MCF 10A (cell line): ENCODE measurements at regions of chr22 and their contacts with region 1.

Region 1: GRCh38 chr22:25447686-25448434 is 116.6 kb upstream of the GRK3 start:
- DNase-seq: peak; percentile 88
- H3K4me3 Mint-ChIP-seq: peak overlapping the region; percentile 91
- H3K27ac Mint-ChIP-seq: peak overlapping the region; percentile 57
- H3K4me1 Mint-ChIP-seq: peaks cover 22% of the 10 kb centered on the region
- H3K27me3 Mint-ChIP-seq: no peaks in the 10 kb centered on the region
- CTCF ChIP-seq: peak; percentile 90

Region 2: DNA sequence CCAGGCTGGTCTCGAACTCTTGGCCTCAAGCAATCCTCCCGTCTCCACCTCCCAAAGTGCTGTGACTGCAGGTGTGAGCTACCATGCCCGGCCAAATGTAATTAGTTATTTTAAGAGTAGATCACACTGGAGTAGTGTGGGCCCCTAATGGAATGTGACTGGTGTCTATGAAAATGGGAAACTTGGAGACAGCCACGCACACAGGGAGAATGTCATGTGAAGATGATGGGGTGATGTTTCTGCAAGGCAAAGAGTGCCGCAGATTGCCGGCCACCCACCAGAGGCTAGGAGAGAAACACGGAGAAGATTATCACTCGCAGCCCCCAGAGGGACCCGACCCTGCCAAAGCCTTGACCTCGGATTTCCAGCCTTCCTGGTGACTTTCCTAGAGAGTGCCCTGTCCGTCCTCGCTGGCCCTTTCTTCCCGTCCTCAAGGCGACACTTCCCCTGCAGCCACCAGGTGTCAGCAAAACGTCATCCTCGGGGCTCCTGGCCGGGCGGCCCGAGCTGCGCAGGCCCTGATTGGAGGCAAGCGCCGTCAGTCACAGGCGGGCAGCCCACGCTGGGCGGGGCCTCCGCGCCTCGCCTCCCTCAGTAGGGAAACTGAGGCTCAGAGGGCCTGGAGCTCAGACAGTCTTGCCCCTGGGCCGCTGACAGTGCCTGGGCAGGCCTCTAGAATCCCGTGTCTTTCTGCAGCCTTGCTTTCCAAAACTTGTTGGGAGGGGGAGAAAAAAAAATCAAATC is 212.1 kb before region 1 on chr22:
- CTCF ChIA-PET with region 1: interaction called, 3 read pairs
- POLR2A ChIA-PET with region 1: no interaction called
- intact Hi-C with region 1: loop called (anchors 5 kb)
- DNase-seq: peak; percentile 80
- H3K4me3 Mint-ChIP-seq: no peak overlapping the region
- H3K27ac Mint-ChIP-seq: no peak overlapping the region
- H3K4me1 Mint-ChIP-seq: peaks cover 7% of the 10 kb centered on the region
- H3K27me3 Mint-ChIP-seq: peaks cover 8% of the 10 kb centered on the region
- CTCF ChIP-seq: peak; percentile 86

Region 3: DNA sequence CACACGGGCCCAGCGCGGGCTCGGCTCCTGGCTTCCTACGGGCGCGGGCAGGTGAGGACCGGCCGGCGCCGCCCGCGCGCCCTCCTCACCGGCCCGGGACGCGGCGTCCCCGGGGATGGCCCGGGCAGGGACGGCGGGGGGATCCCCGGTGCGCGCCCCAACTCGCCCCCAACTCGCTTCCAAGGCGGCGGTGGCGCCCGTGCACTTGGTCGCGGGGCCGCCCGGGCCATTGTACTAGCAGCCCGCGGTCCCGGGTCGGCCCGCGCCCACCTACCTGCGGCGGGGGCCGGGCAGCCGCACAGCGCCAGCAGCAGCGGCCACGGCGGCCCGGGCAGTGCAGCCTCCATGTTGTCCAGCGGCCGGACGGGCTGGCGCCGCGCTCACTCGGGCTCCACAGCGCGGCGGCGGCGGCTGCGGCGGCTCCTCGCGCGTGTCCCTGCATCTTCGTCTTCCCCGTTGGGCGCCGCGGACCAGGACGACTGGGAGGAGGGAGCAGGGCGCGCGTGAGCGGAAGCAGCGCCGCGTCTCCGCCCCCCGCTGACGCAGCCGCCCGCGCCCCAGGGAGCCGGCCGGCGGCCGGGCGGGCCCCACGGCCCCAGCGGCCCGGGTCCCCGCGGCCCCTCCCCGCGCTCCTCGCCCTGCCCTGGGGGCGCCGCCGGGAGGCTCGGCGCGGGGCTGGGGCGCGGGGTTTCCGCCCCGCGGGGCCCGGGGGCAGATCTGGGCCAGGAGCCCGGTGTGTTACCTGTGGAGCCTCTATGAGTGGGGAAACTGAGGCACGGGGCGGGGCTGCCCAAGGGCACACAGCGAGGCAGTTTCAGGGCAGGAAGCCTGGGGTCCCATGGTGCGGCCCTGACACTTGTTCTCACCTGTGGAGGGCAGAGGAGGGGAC is 42.7 kb before region 1 on chr22:
- CTCF ChIA-PET with region 1: interaction called, 7 read pairs
- POLR2A ChIA-PET with region 1: interaction called, 8 read pairs
- intact Hi-C with region 1: loop called (anchors 5 kb)
- DNase-seq: peak; percentile 57
- H3K4me3 Mint-ChIP-seq: peak overlapping the region; percentile 83
- H3K27ac Mint-ChIP-seq: no peak overlapping the region
- H3K4me1 Mint-ChIP-seq: peaks cover 23% of the 10 kb centered on the region
- H3K27me3 Mint-ChIP-seq: no peaks in the 10 kb centered on the region
- CTCF ChIP-seq: no peak

Region 4: GRCh38 chr22:25437414-25438160 is 10.3 kb before region 1 on chr22:
- CTCF ChIA-PET with region 1: interaction called, 15 read pairs
- POLR2A ChIA-PET with region 1: no interaction called
- intact Hi-C with region 1: no loop called
- DNase-seq: no peak
- H3K4me3 Mint-ChIP-seq: no peak overlapping the region
- H3K27ac Mint-ChIP-seq: no peak overlapping the region
- H3K4me1 Mint-ChIP-seq: no peaks in the 10 kb centered on the region
- H3K27me3 Mint-ChIP-seq: peaks cover 14% of the 10 kb centered on the region
- CTCF ChIP-seq: no peak

Region 5: DNA sequence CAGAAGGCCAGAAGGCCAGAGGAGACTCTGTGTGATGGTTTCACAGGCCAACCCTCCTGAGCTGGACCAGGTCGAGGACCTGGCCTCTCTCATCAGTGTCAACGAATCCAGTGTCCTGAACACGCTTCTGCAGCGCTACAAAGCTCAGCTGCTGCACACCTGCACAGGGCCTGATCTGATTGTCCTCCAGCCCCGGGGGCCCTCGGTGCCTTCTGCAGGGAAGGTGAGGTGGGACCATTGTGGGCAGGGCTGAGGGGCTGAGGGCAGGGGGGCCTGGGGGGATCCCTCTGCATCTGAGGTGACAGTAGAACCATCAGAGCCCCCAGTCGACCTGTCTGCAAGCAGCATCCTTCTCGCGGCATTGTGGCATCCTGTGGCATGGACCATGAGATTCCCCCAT is 324.4 kb after region 1 on chr22:
- CTCF ChIA-PET with region 1: interaction called, 10 read pairs
- POLR2A ChIA-PET with region 1: no interaction called
- intact Hi-C with region 1: loop called (anchors 5 kb)
- DNase-seq: no peak
- H3K4me3 Mint-ChIP-seq: no peak overlapping the region
- H3K27ac Mint-ChIP-seq: no peak overlapping the region
- H3K4me1 Mint-ChIP-seq: no peaks in the 10 kb centered on the region
- H3K27me3 Mint-ChIP-seq: no peaks in the 10 kb centered on the region
- CTCF ChIP-seq: no peak